PC-3 (cell line): ENCODE measurements at regions of chr7 and their contacts with region 1.

Region 1: DNA sequence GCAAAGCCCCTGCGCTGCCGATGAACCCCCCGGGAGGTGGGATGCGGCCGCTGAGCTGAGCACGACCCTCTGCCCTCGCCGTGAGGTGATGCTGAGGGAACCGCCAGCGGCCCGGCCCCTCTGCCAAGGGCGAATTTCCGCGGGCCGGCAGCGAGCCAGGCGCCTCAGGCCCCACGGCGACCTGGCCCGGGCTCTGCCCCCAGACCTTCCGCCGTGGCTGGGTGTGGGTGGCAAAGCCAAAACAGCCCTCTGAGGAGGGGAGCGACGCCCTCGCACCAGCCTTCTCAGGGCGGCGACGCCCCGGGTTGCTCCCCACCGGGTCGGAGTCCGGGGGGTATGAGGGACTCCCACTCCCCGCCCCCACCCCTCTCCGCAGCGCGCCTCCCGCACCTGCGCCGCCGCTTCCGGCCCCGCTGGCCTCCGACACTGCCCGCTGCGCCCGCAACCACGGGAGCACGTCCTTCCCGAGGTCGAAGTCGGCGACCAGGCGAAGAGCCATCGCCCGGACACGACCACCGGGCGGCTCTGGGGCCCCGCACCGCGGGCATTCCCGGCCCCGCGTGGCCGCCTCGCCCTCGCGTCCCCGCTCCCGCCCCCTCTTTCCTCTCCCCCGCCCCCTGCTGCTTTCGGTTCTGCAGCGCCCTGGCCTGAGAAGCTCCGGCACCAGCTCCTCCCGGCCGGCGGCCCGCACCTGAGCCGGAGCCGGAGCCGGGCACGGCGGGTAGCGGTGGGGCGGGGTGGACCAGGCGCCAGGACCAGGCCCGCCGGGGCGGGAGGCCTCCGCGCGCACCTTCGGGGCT is at the start of gene GSAP:
- DNase-seq: peak; percentile 64
- ATAC-seq: peak; percentile 69
- H3K4me3 ChIP-seq: peak within 1 kb of the TSS; percentile 78
- H3K27ac ChIP-seq: peak within 1 kb of the TSS; percentile 65
- H3K4me1 ChIP-seq: peaks cover 58% of the 10 kb centered on the region
- H3K27me3 ChIP-seq: no peaks in the 10 kb centered on the region
- CTCF ChIP-seq: no peak; the same call in 1 of the 2 replicates
- total RNA-seq, gene GSAP: 2.5 and 6.5 TPM in 2 replicates

Region 2: GRCh38 chr7:77252506-77252905 is 163.5 kb before region 1 on chr7:
- CTCF ChIA-PET with region 1: no interaction called
- POLR2A ChIA-PET with region 1: no interaction called
- intact Hi-C with region 1: no loop called
- DNase-seq: no peak
- ATAC-seq: no peak
- H3K4me3 ChIP-seq: no peak overlapping the region
- H3K27ac ChIP-seq: no peak overlapping the region
- H3K4me1 ChIP-seq: no peaks in the 10 kb centered on the region
- H3K27me3 ChIP-seq: no peaks in the 10 kb centered on the region
- CTCF ChIP-seq: no peak

Region 3: GRCh38 chr7:77439572-77439971 is 23.5 kb after region 1 on chr7:
- CTCF ChIA-PET with region 1: interaction called, 16 read pairs
- POLR2A ChIA-PET with region 1: interaction called, 3 read pairs
- intact Hi-C with region 1: no loop called
- DNase-seq: peak; percentile 65
- ATAC-seq: peak; percentile 70
- H3K4me3 ChIP-seq: no peak overlapping the region
- H3K27ac ChIP-seq: no peak overlapping the region
- H3K4me1 ChIP-seq: peaks cover 42% of the 10 kb centered on the region
- H3K27me3 ChIP-seq: no peaks in the 10 kb centered on the region
- CTCF ChIP-seq: peak; percentile 70

Region 4: DNA sequence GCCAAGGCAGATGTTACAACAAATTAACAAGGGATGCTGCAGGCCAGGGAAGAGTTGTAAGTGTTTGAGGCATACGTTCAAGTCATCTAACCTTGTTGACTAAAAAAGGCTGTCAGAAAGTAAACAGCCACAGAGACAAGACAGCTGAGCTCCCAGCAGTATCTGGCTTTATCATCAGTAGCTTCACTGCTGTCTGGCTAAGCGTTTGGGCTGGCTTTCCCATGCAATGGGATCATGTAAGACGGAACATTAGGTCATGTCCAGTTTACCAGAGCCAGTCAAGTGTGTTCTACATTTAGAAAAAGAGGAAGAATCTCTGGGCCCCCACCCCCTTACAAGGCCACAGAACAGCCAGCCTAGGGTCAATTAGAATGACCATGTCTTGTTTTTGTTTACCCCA is 51.4 kb after region 1 on chr7:
- CTCF ChIA-PET with region 1: no interaction called
- POLR2A ChIA-PET with region 1: no interaction called
- intact Hi-C with region 1: no loop called
- DNase-seq: no peak
- ATAC-seq: no peak
- H3K4me3 ChIP-seq: no peak overlapping the region
- H3K27ac ChIP-seq: no peak overlapping the region
- H3K4me1 ChIP-seq: peaks cover 8% of the 10 kb centered on the region; the same call in 1 of the 2 replicates
- H3K27me3 ChIP-seq: no peaks in the 10 kb centered on the region
- CTCF ChIP-seq: no peak